WTC11 (cell line): ENCODE measurements at regions of chr5 and their contacts with region 1.

Region 1: DNA sequence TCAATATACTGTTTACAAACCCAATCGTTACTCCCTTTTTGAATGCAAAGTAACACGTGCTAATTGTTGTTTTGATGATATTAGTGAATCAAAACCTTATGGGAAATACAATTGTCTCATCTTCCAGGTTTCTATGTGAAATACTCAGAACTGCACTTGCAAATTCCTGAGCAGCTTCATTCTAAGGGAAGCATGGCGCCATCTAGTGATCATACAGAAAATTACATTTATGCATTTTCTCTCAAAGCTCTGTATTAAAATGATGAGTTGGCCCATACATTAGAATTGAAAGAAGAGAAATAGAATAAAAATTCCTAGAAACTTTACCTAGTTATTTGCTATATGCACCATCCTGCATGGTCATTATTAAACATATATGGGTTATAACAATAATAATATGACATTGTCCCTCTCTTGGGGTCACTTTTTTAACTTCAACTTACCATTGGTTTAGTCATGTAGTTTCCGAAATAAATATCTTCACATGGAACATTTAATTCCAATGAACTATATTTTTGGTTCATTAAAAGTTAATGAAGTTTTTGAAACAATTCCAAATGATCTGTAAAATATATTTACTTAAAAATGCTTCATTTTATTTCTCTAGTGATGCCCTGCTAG is 220.0 kb downstream of the PDE4D start:
- DNase-seq: no peak
- ATAC-seq: 0 out of 2 replicates have a peak, but pooled peaks have one; percentile 36
- H3K4me3 Mint-ChIP-seq: no peak overlapping the region
- H3K27ac Mint-ChIP-seq: peak overlapping the region; percentile 55; the same call in 1 of the 2 replicates
- H3K4me1 Mint-ChIP-seq: peaks cover 6% of the 10 kb centered on the region
- H3K27me3 Mint-ChIP-seq: no peaks in the 10 kb centered on the region
- CTCF ChIP-seq: peak; percentile 81

Region 2: GRCh38 chr5:59390074-59390659 is 283.4 kb before region 1 on chr5:
- CTCF ChIA-PET with region 1: interaction called, 15 read pairs
- POLR2A ChIA-PET with region 1: no interaction called
- DNase-seq: no peak
- ATAC-seq: no peak
- H3K4me3 Mint-ChIP-seq: no peak overlapping the region
- H3K27ac Mint-ChIP-seq: no peak overlapping the region
- H3K4me1 Mint-ChIP-seq: peaks cover 16% of the 10 kb centered on the region
- H3K27me3 Mint-ChIP-seq: no peaks in the 10 kb centered on the region
- CTCF ChIP-seq: peak; percentile 71

Region 3: DNA sequence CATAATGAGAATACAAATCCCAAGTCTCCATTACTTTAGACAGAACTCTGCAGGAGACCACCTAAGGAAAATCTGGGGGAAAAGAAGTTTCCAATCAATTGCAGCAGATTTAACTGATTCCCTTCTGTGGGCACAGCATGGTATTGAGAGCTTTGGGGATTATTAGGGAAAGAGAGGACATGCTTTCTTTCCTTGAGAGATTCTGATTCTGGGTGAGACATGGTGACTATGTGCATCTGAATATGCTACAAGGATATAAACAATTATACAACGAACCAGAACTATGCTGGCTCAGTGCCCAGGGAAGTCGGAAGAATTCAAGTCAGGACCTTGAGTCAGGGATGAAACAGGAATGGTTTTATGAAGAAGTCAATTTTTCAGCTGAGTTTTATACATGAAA is 36.3 kb after region 1 on chr5:
- CTCF ChIA-PET with region 1: interaction called, 10 read pairs
- POLR2A ChIA-PET with region 1: no interaction called
- DNase-seq: no peak
- ATAC-seq: peak; percentile 55
- H3K4me3 Mint-ChIP-seq: peak overlapping the region; percentile 43
- H3K27ac Mint-ChIP-seq: peak overlapping the region; percentile 96
- H3K4me1 Mint-ChIP-seq: peaks cover 59% of the 10 kb centered on the region
- H3K27me3 Mint-ChIP-seq: no peaks in the 10 kb centered on the region
- CTCF ChIP-seq: no peak

Region 4: DNA sequence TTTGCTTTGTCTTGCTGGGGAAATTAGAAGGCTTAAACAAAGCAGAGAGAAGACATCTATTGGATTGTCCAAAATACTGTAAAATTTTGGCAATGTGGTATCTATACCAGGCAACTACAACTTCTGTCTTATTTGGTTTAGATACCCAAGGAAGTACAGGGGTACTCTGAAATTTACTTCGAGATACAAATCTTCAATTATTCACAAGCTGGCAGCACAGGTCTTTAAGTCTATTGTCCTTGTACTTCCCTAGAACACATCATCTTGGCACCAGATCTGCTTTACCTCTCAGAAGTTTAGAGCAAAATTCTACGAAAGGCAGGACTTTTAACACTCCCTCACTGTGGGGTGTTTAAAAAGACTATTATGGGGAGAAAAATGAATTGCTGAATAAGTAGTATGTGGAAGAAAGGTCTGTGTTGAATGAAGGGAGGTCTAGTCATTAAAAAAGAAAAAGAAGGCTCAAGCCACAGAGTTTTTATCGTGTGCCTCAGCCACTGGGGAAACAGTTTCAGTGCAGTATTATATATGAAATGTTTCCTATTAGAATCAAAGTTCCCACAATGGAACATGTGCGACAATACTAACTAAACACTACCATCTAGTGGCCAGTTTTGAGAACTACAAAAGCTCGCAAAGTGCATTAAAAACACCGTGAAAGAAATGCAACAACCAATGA is 126.3 kb after region 1 on chr5:
- CTCF ChIA-PET with region 1: interaction called, 10 read pairs
- POLR2A ChIA-PET with region 1: no interaction called
- DNase-seq: no peak
- ATAC-seq: peak; percentile 61
- H3K4me3 Mint-ChIP-seq: no peak overlapping the region
- H3K27ac Mint-ChIP-seq: no peak overlapping the region
- H3K4me1 Mint-ChIP-seq: peaks cover 15% of the 10 kb centered on the region
- H3K27me3 Mint-ChIP-seq: no peaks in the 10 kb centered on the region
- CTCF ChIP-seq: no peak; the same call in none of the 2 replicates